ENCODE measurements at regions of chr13 and their contacts with region 1.

Region 1: GRCh38 chr13:50208826-50209335 is 193.6 kb downstream of the KCNRG start:
- DNase-seq: peak; percentile 27
- ATAC-seq: peak; percentile 91
- H3K4me3 Mint-ChIP-seq: peak overlapping the region; percentile 74
- H3K27ac Mint-ChIP-seq: no peak overlapping the region
- H3K4me1 Mint-ChIP-seq: peaks cover 12% of the 10 kb centered on the region
- H3K27me3 Mint-ChIP-seq: no peaks in the 10 kb centered on the region
- CTCF ChIP-seq: no peak

Region 2: DNA sequence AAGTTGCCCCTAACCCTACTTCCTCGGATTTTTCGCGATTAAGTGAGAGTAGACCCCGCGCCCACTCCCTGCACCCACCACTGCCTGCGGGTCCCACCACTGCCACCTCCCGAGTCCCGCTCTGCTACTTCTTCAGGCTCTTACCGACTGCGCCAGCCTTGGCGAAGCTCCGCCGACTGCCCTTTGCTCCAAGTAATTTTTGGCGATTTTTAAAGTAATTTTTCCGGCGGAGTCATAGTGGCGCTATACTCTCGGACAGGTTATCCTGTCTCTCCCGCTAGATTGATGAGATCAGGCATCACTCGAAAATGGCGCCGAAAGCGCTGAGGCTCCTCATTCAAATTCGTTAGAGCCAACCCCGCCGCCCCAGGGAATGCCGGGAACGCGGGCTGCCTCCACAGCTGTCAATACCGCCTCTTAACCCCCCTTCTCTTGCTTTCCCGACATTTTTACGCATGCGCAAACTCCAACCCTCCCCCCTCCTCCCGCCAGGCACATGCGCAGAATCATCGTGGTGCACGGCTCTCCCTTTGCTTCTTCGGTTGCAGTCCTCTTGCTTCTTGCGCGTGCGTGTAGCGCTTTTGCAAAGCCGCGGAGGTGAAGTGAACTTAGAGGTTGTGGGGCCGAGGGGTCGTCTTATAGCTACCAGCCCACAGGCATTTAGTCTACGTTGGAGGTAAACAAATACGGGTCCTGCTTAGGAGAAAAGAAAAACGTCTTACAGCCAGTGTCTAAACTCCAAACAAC is 127.0 kb before region 1 on chr13:
- CTCF ChIA-PET with region 1: no interaction called
- POLR2A ChIA-PET with region 1: no interaction called
- intact Hi-C with region 1: no loop called
- DNase-seq: peak; percentile 95
- ATAC-seq: peak; percentile 73
- H3K4me3 Mint-ChIP-seq: peak overlapping the region; percentile 100
- H3K27ac Mint-ChIP-seq: peak overlapping the region; percentile 100
- H3K4me1 Mint-ChIP-seq: peaks cover 62% of the 10 kb centered on the region
- H3K27me3 Mint-ChIP-seq: no peaks in the 10 kb centered on the region
- CTCF ChIP-seq: no peak

Region 3: DNA sequence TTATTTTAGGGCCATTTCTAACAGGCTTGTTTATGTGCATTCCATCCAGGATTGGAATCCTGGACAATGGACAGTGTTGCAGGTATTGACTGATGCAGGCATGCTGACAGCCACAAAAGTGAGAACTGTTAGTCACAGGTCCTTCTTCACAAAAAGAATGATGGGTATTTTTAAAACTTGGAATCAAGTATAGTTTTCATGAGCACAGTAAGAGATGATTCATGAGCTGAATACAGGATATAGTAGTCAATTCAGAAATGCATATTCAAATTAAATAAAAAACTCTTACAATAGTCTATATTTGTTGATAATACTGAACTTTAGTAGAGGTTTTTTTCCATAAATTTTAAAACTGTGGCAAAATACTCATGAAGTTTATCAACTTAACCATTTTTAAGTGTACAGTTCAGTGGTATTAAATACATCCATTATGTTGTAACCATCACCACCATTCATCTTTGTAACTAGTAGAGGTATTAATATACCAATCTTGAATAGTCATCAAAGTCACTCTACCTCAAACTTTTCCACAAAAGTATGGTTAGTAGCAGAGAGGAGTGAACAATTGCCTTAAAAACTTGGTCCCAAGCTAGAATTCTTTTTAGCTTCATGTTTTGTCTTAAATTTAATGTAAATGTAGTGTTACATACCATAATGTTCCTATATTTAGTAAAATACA is 114.1 kb before region 1 on chr13:
- CTCF ChIA-PET with region 1: no interaction called
- POLR2A ChIA-PET with region 1: no interaction called
- intact Hi-C with region 1: no loop called
- DNase-seq: no peak
- ATAC-seq: no peak
- H3K4me3 Mint-ChIP-seq: no peak overlapping the region
- H3K27ac Mint-ChIP-seq: no peak overlapping the region
- H3K4me1 Mint-ChIP-seq: peaks cover 32% of the 10 kb centered on the region
- H3K27me3 Mint-ChIP-seq: no peaks in the 10 kb centered on the region
- CTCF ChIP-seq: no peak

Region 4: DNA sequence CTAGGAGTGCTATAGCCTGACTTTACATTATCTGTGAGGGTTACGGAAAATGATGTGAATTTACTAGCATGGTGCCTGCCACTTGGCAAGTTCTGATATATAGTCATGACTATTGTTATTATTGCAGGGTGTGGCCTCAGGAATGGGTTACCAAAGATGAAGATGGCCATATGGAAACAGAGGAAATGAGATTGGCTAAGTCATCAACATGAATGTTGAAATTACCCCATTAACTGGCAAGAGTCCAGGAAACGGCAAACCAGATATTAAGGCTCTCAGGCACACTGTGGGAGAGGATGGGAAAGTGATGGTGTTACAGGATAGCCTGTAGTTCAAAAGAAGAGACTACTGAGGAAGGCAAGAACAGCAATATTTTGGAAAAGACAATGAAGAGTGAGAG is 10.4 kb before region 1 on chr13:
- CTCF ChIA-PET with region 1: no interaction called
- POLR2A ChIA-PET with region 1: interaction called, 3 read pairs
- intact Hi-C with region 1: loop called (anchors 1 kb)
- DNase-seq: no peak
- ATAC-seq: no peak
- H3K4me3 Mint-ChIP-seq: no peak overlapping the region
- H3K27ac Mint-ChIP-seq: no peak overlapping the region
- H3K4me1 Mint-ChIP-seq: no peaks in the 10 kb centered on the region
- H3K27me3 Mint-ChIP-seq: no peaks in the 10 kb centered on the region
- CTCF ChIP-seq: no peak

Region 5: GRCh38 chr13:50229960-50230661 is 21.2 kb after region 1 on chr13:
- CTCF ChIA-PET with region 1: no interaction called
- POLR2A ChIA-PET with region 1: no interaction called
- intact Hi-C with region 1: loop called (anchors 2 kb)
- DNase-seq: no peak
- ATAC-seq: peak; percentile 49
- H3K4me3 Mint-ChIP-seq: no peak overlapping the region
- H3K27ac Mint-ChIP-seq: peak overlapping the region; percentile 1
- H3K4me1 Mint-ChIP-seq: peaks cover 40% of the 10 kb centered on the region
- H3K27me3 Mint-ChIP-seq: no peaks in the 10 kb centered on the region
- CTCF ChIP-seq: no peak

Measured in activated B cell treated with CpG ODN at 0.5 μM for 24 hours (primary cell).